MCF 10A (cell line): ENCODE measurements at regions of chr17 and their contacts with region 1.

Region 1: DNA sequence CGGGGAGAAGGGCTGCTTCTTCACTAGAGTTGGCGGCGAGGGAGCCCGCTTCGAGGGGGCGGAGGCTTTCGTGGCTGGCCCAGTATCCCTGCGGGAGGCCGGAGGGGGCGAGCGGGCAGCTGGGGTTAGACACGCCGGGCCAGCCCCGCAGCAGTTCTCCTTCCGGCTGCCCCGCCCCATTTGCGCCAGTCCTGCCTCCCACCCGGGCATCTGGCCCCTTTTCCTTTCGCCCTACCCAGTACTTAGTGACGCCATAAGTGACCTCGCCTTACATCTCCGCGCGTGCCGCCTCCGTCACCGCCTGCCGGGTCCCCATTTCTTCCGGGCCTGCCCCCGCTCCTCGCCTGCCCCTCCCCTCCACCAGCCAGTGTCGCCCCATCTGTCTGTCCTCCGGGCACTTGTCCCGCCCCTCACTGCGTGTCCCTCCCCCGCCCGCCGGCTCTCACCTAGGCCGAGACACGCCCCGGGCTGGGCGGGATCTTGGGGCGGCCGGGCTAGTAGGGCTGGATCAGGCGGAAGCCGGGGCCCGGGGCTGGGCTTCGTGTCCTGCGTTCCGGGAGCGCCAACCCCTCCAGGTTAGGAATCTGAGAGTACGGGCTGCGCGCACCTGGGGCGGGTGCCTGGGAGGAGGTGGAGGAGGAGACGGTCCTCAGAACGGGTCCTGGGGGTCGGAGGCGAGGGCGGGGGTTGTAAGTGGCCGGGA is 14.3 kb downstream of the SPATA32 start:
- DNase-seq: peak; percentile 97
- H3K4me3 Mint-ChIP-seq: peak overlapping the region; percentile 96
- H3K27ac Mint-ChIP-seq: peak overlapping the region; percentile 80
- H3K4me1 Mint-ChIP-seq: peaks cover 20% of the 10 kb centered on the region
- H3K27me3 Mint-ChIP-seq: no peaks in the 10 kb centered on the region
- CTCF ChIP-seq: no peak

Region 2: DNA sequence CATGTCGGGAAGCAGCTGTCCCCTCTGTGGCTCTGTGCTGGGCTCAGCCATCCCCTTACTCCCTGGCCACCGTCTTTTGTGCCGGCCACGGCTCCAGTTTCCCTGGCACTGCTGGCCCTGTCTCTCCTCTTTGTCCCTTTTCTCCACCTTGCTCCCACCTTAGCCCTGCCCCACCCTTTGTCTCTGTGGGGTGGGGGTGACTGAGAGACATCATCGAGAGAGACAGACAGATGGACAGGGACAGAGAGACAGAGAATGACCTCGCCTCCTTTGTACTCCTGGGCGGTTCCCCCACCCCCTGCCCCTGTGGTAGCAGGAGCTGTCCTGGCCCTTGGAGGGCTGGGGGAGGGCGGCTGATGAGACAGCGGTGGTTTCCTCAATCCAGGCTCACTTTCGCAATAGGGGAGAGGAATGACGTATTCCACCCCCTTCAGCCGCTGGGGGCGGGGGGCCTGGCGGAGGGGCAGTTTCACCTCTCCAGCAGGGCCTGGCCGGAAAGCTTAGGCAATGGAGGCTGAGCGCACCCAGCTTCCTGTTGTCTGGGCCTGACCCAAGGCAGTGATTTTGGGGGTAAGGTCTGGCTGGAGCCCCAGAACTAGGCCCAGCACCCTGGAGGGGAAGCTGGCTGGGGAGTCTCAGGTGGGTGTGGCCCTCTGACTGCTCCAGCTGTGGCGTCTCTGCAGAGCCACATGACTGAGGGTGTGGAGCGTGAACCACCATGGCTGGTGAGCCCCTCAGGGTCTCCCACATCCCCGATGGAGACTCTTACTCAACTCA is 18.6 kb before region 1 on chr17:
- CTCF ChIA-PET with region 1: interaction called, 5 read pairs
- POLR2A ChIA-PET with region 1: interaction called, 14 read pairs
- intact Hi-C with region 1: no loop called
- DNase-seq: peak; percentile 97
- H3K4me3 Mint-ChIP-seq: peak overlapping the region; percentile 46
- H3K27ac Mint-ChIP-seq: peak overlapping the region; percentile 91
- H3K4me1 Mint-ChIP-seq: peaks cover 53% of the 10 kb centered on the region
- H3K27me3 Mint-ChIP-seq: no peaks in the 10 kb centered on the region
- CTCF ChIP-seq: no peak

Region 3: GRCh38 chr17:45258981-45259380 is 11.4 kb after region 1 on chr17:
- CTCF ChIA-PET with region 1: interaction called, 3 read pairs
- POLR2A ChIA-PET with region 1: interaction called, 12 read pairs
- intact Hi-C with region 1: no loop called
- DNase-seq: no peak
- H3K4me3 Mint-ChIP-seq: no peak overlapping the region
- H3K27ac Mint-ChIP-seq: no peak overlapping the region
- H3K4me1 Mint-ChIP-seq: no peaks in the 10 kb centered on the region
- H3K27me3 Mint-ChIP-seq: no peaks in the 10 kb centered on the region
- CTCF ChIP-seq: no peak